Activated naive CD4-positive, alpha-beta T cell treated with anti-CD3 and anti-CD28 coated beads for 36 hours (primary cell): ENCODE measurements at regions of chr11 and their contacts with region 1.

Region 1: GRCh38 chr11:14764579-14765527 is 121.2 kb downstream of the PDE3B start:
- DNase-seq: peak; percentile 58
- H3K4me3 Mint-ChIP-seq: peak overlapping the region; percentile 41
- H3K27ac Mint-ChIP-seq: no peak overlapping the region
- H3K4me1 Mint-ChIP-seq: peaks cover 45% of the 10 kb centered on the region
- H3K27me3 Mint-ChIP-seq: no peaks in the 10 kb centered on the region

Region 2: DNA sequence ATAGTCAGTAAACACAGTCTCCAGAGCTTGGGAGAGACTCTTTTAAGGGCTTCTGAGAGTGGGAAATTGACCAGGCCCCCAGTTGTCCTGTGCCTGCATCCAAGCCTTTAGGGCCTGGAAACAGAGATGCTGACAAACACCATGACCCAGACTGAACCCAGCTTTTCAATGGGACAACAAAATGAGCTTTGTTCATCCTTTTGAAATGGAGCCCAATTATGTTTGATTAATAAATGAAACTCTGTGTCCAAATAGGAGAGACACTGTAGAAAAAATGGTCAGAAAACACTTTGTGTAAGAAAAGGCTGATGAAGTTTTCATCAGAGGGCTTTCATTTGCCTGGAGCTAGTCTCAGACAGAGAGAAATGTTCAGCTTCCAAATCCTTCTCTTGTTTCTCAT is 551.9 kb before region 1 on chr11:
- CTCF ChIA-PET with region 1: no interaction called
- intact Hi-C with region 1: no loop called
- DNase-seq: no peak
- H3K4me3 Mint-ChIP-seq: no peak overlapping the region
- H3K27ac Mint-ChIP-seq: no peak overlapping the region
- H3K4me1 Mint-ChIP-seq: no peaks in the 10 kb centered on the region
- H3K27me3 Mint-ChIP-seq: no peaks in the 10 kb centered on the region

Region 3: DNA sequence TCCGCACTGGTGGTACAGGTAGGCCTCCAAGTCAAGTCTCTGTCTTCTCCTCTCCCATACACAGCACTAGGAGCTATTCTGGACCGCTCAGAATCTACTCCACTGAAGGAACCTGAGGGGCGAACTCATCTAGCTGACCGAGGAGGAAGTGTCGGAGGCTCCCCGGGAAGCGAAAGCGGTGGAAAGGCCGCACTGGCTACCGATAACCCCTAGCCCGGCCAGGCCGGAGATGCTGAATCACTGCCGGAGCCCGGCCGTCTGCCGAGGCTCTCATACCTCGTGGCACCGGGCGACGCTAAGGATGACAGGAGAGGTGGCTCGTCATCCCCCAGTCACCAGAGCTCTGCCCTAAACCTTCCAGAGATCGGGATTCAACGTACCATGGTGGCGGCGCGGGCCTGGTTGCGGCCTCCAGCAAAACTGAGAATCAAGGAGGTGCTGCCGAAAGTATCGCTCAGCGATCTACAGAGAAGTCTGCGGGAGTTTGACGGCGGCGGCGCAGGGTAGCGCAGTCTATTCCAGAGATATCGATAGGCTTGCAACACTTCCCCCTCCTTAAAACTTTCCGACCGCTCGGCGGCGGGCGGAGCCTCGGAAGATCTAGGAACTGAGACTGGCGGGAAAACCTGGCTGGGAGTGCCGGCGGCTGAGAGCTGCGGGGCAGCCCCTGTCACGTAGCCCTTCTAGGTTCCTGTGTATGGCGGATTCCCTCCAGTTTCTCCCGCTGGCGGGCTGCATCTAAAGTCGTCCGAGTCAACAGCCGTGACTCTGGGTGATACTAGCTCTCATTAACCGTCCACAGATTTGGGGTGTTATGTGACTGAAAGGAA is 244.7 kb before region 1 on chr11 and contains the start of gene PSMA1:
- CTCF ChIA-PET with region 1: no interaction called
- intact Hi-C with region 1: loop called (anchors 1 kb)
- DNase-seq: peak; percentile 98
- H3K4me3 Mint-ChIP-seq: peak within 1 kb of the TSS; percentile 96
- H3K27ac Mint-ChIP-seq: peak within 1 kb of the TSS; percentile 97
- H3K4me1 Mint-ChIP-seq: peaks cover 24% of the 10 kb centered on the region
- H3K27me3 Mint-ChIP-seq: no peaks in the 10 kb centered on the region
- total RNA-seq, gene PSMA1: 367 to 375 TPM

Region 4: GRCh38 chr11:14657857-14658256 is 107.0 kb before region 1 on chr11:
- CTCF ChIA-PET with region 1: no interaction called
- intact Hi-C with region 1: no loop called
- DNase-seq: no peak
- H3K4me3 Mint-ChIP-seq: no peak overlapping the region
- H3K27ac Mint-ChIP-seq: no peak overlapping the region
- H3K4me1 Mint-ChIP-seq: peaks cover 50% of the 10 kb centered on the region
- H3K27me3 Mint-ChIP-seq: no peaks in the 10 kb centered on the region